ENCODE measurements at regions of chr3 and their contacts with region 1.

Region 1: DNA sequence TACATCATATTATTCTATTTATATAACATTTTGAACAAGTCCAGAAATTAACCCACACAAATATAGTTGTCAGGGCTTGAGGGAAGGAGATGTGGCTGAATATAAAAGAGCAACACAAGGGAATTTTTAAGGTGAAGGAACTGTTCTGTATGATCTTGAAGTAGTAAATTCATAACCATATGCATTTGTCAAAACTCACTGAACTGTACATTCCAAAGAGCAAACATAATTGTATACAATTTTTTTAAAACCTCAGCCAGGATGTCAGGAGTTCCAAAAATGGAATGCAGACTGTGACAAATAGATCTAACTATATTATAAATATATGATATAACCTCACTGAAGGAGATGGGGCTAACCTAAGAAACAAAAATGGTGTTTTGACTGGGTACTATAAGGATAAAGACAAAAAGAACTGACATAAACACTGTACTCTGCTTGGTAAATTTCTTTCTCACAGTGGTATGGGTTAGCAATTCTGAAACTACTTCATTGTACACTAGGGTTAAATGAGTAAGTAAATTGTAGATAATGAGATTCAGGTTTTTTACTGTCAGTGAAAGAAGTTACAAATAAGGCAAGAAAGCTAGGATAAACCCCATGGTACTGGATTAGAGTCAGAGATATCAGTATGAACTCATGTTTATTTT is 14.4 kb downstream of the GOLGB1 start:
- DNase-seq: no peak
- H3K4me3 Mint-ChIP-seq: no peak overlapping the region
- H3K27ac Mint-ChIP-seq: peak overlapping the region; percentile 0
- H3K4me1 Mint-ChIP-seq: peaks cover 38% of the 10 kb centered on the region
- H3K27me3 Mint-ChIP-seq: no peaks in the 10 kb centered on the region

Region 2: GRCh38 chr3:121584418-121584817 is 150.8 kb before region 1 on chr3:
- CTCF ChIA-PET with region 1: no interaction called
- intact Hi-C with region 1: no loop called
- DNase-seq: no peak
- H3K4me3 Mint-ChIP-seq: no peak overlapping the region
- H3K27ac Mint-ChIP-seq: no peak overlapping the region
- H3K4me1 Mint-ChIP-seq: no peaks in the 10 kb centered on the region
- H3K27me3 Mint-ChIP-seq: peaks cover 4% of the 10 kb centered on the region

Region 3: DNA sequence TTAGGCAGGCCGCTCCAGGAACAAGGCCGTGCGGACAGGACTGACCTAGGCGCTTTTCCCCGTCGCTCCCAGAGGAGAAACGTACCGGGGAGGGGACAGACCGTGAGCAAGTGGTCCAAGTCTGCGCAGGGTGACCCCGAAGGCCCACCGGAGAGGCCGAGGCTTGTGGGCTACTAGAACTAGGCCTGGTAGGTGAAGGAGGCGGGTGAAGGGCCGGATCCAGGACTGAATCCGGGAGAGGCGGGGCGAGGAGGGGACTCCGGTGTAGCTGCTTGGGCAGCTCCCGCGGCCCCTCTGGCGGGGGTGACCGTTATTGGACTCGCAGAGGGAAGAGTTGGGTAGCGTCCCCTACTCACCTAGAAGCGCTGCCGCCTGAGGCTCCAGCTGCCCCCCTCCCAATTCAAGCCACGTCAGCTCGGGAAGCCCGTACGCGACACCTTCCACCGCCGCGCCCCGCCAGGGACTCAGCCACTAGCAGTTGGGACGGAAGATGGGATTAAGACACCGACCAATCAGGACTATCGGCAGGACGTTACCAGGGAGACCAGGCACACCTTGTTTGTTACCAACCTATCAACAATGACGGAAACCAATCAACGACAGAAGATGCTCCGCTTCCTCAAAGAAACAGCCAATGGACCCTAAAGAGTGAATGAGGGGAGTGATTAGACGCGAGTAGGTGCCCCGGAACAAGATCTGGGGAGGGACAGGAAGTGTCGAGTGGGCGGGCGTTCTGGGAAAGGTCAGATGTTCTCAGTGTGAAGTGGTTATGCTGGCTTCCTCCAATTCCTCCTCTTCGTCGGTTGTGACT is 14.3 kb after region 1 on chr3 and contains the start of gene GOLGB1:
- CTCF ChIA-PET with region 1: interaction called, 3 read pairs
- intact Hi-C with region 1: loop called (anchors 1 kb)
- DNase-seq: peak; percentile 97
- H3K4me3 Mint-ChIP-seq: no peak within 1 kb of the TSS
- H3K27ac Mint-ChIP-seq: no peak within 1 kb of the TSS
- H3K4me1 Mint-ChIP-seq: peaks cover 5% of the 10 kb centered on the region
- H3K27me3 Mint-ChIP-seq: no peaks in the 10 kb centered on the region
- total RNA-seq, gene GOLGB1: 18.2 to 19.7 TPM

Measured in activated naive CD4-positive, alpha-beta T cell treated with anti-CD3 and anti-CD28 coated beads for 36 hours (primary cell).